ENCODE measurements at regions of chr5 and their contacts with region 1.

Region 1: DNA sequence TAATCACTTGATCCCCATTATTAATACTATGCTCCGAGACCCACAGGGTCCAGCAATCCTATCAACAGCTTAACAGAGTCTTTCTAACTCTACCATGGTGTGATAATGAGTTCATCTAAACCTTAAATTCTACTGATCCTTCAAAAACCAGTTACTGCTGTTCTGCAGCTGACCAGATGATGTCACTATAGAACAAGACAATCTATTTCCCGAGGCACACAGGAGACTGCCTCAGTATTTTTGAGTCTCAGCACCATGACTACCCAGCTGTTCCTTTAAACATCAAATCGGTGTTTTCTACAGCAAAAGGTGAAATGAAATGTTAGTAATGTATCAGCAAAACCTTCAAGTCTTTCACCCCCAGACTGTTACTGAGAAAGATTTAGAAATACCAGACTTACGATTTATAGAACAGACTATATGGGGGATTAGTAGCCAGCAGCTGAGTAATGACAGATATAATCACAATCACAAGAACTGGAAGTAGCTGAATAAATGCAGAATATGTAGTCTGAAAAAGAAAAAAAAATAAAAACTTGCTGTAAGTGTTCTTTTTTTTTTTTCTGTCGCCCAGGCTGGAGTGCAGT is 16.9 kb downstream of the DNAJC18 start:
- DNase-seq: no peak
- ATAC-seq: peak; percentile 95
- H3K4me3 ChIP-seq: no peak overlapping the region
- H3K27ac ChIP-seq: no peak overlapping the region
- H3K4me1 ChIP-seq: no peaks in the 10 kb centered on the region
- H3K27me3 ChIP-seq: no peaks in the 10 kb centered on the region
- CTCF ChIP-seq: peak; percentile 85 to 95 (median 94)
- EP300 ChIP-seq: no peak
- POLR2A ChIP-seq: no peak
- RAD21 ChIP-seq: peak; percentile 99

Region 2: GRCh38 chr5:139197710-139198669 is 224.4 kb before region 1 on chr5 and contains the start of gene SIL1:
- CTCF ChIA-PET with region 1: no interaction called
- POLR2A ChIA-PET with region 1: no interaction called
- RAD21 ChIA-PET with region 1: no interaction called
- SMC1A ChIA-PET with region 1: no interaction called
- in situ Hi-C with region 1: no loop called
- intact Hi-C with region 1: no loop called
- DNase-seq: peak; percentile 63
- ATAC-seq: peak; percentile 99
- H3K4me3 ChIP-seq: peak within 1 kb of the TSS; percentile 86
- H3K27ac ChIP-seq: peak within 1 kb of the TSS; percentile 97
- H3K4me1 ChIP-seq: peaks cover 4% of the 10 kb centered on the region
- H3K27me3 ChIP-seq: no peaks in the 10 kb centered on the region
- CTCF ChIP-seq: no peak
- EP300 ChIP-seq: no peak
- POLR2A ChIP-seq: peak; percentile 98
- RAD21 ChIP-seq: no peak
- polyA plus RNA-seq, gene SIL1: 4.1 to 8.2 TPM

Region 3: DNA sequence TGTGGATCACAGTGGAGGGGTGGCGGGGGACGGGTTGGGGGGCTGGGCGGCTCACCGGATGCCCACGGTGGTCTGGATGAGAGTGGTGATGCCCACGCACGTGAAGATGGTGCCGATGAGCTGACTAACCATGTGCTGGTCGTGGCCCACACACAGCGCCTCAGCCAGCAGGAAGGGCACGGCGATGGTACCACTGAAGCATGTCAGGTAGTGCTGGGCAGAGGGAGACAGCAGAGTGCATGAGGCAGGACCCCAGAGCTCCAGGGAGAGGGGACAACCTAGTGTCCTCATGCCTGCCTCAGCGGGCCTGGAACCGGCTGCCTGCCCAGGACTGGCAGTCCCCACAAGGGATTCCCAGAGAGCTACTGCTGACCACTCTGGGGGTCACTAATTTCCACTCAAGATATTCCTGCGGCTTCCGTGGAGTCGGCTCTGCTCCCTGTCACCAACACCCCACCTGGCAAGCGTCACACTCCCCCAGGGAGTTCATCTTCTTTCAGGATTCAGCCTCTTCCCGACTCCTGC is 40.5 kb before region 1 on chr5:
- CTCF ChIA-PET with region 1: no interaction called
- POLR2A ChIA-PET with region 1: no interaction called
- RAD21 ChIA-PET with region 1: no interaction called
- SMC1A ChIA-PET with region 1: no interaction called
- in situ Hi-C with region 1: no loop called
- intact Hi-C with region 1: no loop called
- DNase-seq: no peak
- ATAC-seq: no peak
- H3K4me3 ChIP-seq: no peak overlapping the region
- H3K27ac ChIP-seq: no peak overlapping the region
- H3K4me1 ChIP-seq: peaks cover 24% of the 10 kb centered on the region
- H3K27me3 ChIP-seq: no peaks in the 10 kb centered on the region
- CTCF ChIP-seq: no peak
- EP300 ChIP-seq: no peak
- POLR2A ChIP-seq: peak; percentile 69
- RAD21 ChIP-seq: no peak

Region 4: GRCh38 chr5:139403787-139404483 is 18.5 kb before region 1 on chr5 and contains the start of gene SPATA24:
- CTCF ChIA-PET with region 1: interaction called, 39 read pairs
- POLR2A ChIA-PET with region 1: interaction called, 10 read pairs
- RAD21 ChIA-PET with region 1: interaction called, 16 read pairs
- SMC1A ChIA-PET with region 1: interaction called, 11 read pairs
- in situ Hi-C with region 1: no loop called
- intact Hi-C with region 1: no loop called
- DNase-seq: peak; percentile 95
- ATAC-seq: peak; percentile 86
- H3K4me3 ChIP-seq: peak within 1 kb of the TSS; percentile 74
- H3K27ac ChIP-seq: peak within 1 kb of the TSS; percentile 83
- H3K4me1 ChIP-seq: peaks cover 30% of the 10 kb centered on the region
- H3K27me3 ChIP-seq: no peaks in the 10 kb centered on the region
- CTCF ChIP-seq: no peak
- EP300 ChIP-seq: 0 out of 4 replicates have a peak, but pooled peaks of 1 of the 2 experiments have one; percentile 14
- POLR2A ChIP-seq: peak; percentile 78
- RAD21 ChIP-seq: no peak
- polyA plus RNA-seq, gene SPATA24: 7.6 to 8.5 TPM

Region 5: DNA sequence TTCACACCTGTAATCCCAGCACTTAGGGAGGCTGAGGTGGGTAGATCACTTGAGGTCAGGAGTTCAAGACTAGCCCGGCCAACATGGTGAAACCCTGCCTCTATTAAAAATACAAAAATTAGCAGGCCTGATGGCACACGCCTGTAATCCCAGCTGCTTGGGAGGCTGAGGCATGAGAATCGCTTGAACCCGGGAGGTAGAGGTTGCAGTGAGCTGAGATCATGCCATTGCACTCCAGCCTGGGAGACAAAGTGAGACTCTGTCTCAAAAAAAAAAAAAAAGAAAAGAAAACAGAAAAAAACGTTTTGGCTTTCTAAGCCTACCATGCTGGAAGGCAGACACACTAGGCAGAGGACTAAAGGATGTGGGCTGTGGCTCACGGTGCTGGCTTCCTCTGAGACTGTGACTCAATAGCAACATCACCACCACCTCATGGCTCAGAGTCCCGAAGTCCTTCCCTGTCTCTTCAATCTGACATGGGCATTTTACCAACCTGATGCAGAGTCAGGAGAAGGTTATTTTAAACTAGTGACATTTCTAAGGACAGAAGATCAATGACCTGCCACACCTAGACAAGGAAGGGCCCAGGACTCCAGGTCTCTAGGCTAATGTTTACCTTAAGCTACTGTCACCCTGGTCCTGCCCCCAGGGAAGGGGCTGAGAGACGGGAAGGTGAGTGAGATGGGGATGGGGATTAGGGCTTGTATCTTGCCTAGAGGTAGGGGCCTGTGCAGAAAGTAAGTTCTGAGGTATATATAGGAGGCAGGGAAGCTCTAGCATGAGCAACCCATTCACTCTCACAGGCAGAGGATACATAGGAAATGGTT is 36.4 kb after region 1 on chr5:
- CTCF ChIA-PET with region 1: interaction called, 39 read pairs
- POLR2A ChIA-PET with region 1: interaction called, 3 read pairs
- RAD21 ChIA-PET with region 1: interaction called, 15 read pairs
- SMC1A ChIA-PET with region 1: interaction called, 13 read pairs
- in situ Hi-C with region 1: no loop called
- intact Hi-C with region 1: no loop called
- DNase-seq: peak; percentile 60
- ATAC-seq: peak; percentile 70
- H3K4me3 ChIP-seq: no peak overlapping the region
- H3K27ac ChIP-seq: peak overlapping the region; percentile 93
- H3K4me1 ChIP-seq: peaks cover 45% of the 10 kb centered on the region
- H3K27me3 ChIP-seq: no peaks in the 10 kb centered on the region
- CTCF ChIP-seq: no peak
- EP300 ChIP-seq: no peak
- POLR2A ChIP-seq: no peak
- RAD21 ChIP-seq: no peak

Region 6: GRCh38 chr5:139512786-139513390 is 90.5 kb after region 1 on chr5:
- CTCF ChIA-PET with region 1: interaction called, 491 read pairs
- POLR2A ChIA-PET with region 1: interaction called, 12 read pairs
- RAD21 ChIA-PET with region 1: interaction called, 241 read pairs
- SMC1A ChIA-PET with region 1: interaction called, 235 read pairs
- in situ Hi-C with region 1: loop called (anchors 5 kb)
- intact Hi-C with region 1: loop called (anchors 1 kb)
- DNase-seq: no peak
- ATAC-seq: peak; percentile 9
- H3K4me3 ChIP-seq: no peak overlapping the region
- H3K27ac ChIP-seq: no peak overlapping the region
- H3K4me1 ChIP-seq: peaks cover 11% of the 10 kb centered on the region
- H3K27me3 ChIP-seq: no peaks in the 10 kb centered on the region
- CTCF ChIP-seq: 0 out of 6 replicates have a peak, but pooled peaks of 1 of the 3 experiments have one; percentile 7
- EP300 ChIP-seq: no peak
- POLR2A ChIP-seq: no peak
- RAD21 ChIP-seq: no peak

Region 7: GRCh38 chr5:139560752-139561654 is 138.6 kb after region 1 on chr5 and contains the start of gene UBE2D2:
- CTCF ChIA-PET with region 1: interaction called, 6 read pairs
- POLR2A ChIA-PET with region 1: interaction called, 6 read pairs
- RAD21 ChIA-PET with region 1: interaction called, 5 read pairs
- SMC1A ChIA-PET with region 1: interaction called, 12 read pairs
- in situ Hi-C with region 1: no loop called
- intact Hi-C with region 1: loop called (anchors 5 kb)
- DNase-seq: peak; percentile 92
- ATAC-seq: peak; percentile 87
- H3K4me3 ChIP-seq: peak within 1 kb of the TSS; percentile 75
- H3K27ac ChIP-seq: peak within 1 kb of the TSS; percentile 69
- H3K4me1 ChIP-seq: peaks cover 20% of the 10 kb centered on the region
- H3K27me3 ChIP-seq: no peaks in the 10 kb centered on the region
- CTCF ChIP-seq: no peak
- EP300 ChIP-seq: no peak
- POLR2A ChIP-seq: peak; percentile 87
- RAD21 ChIP-seq: no peak
- polyA plus RNA-seq, gene UBE2D2: 58.6 to 120 TPM

Measured in GM12878 (cell line).